AG04450 (cell line): ENCODE measurements at regions of chr1 and their contacts with region 1.

Region 1: DNA sequence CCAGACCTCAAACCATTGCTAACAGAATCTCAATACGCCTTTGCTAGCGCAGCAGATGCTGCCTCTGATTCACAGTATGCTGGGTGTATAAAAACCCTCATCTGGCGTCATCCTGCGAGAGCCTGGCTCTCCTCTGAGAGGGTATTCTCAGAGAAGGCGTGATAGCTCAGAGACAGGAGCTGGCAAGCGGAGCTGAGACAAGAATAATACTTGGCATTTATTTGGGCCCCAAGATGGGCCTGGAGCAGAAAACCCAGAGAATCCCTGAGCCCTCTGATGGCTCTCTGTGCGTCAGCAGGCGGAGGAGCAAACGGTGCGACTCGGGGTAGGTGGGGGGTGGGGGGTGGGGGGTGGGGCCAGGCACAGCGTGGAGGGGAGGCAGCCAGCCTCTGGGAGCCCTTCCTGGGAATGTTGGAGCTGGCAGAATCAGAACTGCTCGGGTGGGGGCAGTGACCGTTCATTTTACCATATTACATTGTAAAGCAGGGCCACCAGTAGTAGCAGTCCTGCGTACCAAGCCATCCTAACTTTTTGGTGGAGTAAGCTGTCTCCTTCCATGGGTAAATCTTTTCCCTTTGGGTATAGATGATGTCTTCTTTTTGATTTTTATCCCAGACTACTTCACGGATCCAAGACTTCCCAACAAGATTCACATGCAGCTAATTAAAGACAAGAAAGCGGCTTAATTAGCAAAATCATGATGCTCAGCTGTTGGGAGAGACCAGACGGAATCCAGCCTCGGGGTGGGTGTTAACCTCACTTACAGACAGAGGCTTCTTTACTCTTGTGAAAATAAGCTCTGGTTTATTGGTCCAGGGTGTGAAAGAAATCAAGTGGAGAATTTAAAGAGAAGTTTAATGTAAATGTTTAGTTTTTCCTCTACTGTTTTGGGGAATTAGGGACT is 7.1 kb downstream of the RIIAD1 start:
- DNase-seq: peak; percentile 16
- H3K4me3 ChIP-seq: no peak overlapping the region
- H3K27ac ChIP-seq: no peak overlapping the region
- H3K27me3 ChIP-seq: peaks cover 44% of the 10 kb centered on the region
- CTCF ChIP-seq: no peak

Region 2: GRCh38 chr1:151443846-151444782 is 284.3 kb before region 1 on chr1:
- CTCF ChIA-PET with region 1: interaction called, 24 read pairs
- POLR2A ChIA-PET with region 1: no interaction called
- DNase-seq: peak; percentile 65
- H3K4me3 ChIP-seq: no peak overlapping the region
- H3K27ac ChIP-seq: no peak overlapping the region
- H3K27me3 ChIP-seq: no peaks in the 10 kb centered on the region
- CTCF ChIP-seq: peak; percentile 80